ENCODE measurements at regions of chr17 and their contacts with region 1.

Region 1: GRCh38 chr17:64406321-64407200 is 15.9 kb upstream of the PECAM1 start:
- DNase-seq: no peak

Region 2: DNA sequence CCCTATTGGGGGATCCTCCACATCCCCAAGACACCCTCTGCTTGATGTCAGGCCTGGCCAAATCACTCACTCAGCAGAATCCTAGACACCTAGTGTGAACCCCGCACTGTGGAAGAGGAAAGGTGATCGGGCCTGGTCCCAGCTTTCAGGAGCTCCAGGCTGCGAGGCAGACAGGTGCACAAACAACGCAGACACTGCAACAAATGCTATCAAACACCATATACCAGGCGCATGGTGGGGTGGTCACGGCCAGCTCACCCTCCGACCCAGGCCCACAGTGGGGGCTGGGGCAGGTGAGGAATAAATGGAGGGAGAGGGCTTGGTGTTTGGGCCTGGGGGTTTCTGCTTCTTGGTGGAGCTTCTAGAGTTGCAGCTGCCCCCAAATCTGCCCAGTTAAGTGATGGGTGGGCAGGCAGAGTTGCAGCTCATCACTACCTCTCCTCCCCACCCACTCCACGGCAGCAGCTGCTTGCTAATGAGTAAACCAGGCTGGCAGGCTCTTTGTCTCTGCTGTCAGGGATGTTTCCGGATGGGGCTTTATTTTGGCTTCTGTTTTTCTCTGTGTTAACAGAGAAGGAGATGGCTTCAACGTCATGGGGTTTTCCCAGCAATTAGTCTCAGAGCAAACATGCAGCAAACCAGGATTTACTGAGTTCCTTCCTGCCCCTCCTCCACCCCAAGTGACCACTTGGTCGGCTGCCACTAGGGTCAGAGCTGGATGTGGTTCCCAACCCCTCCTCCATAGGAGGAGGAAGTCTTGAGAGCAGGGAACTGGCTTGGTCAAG is 62.5 kb before region 1 on chr17:
- intact Hi-C with region 1: no loop called
- DNase-seq: peak; percentile 92

Region 3: DNA sequence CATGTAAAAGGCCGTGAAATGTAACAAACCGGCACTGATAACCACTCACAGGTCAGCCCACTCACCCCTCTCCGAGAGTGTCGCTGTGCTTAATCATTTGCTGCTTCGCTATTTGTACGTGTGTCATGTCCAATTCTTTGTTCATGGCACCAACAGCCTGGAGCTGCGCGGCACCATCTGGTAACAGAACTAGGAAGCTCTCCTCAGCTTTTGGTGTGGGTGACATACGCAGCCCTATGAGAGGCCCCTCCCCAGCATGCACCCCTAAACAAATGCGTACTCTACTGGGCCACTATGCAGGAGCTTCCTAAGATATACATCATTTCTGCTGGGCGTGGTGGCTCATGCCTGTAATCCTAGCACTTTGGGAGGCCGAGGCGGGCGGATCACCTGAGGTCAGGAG is 13.6 kb before region 1 on chr17:
- intact Hi-C with region 1: loop called (anchors 2 kb)
- DNase-seq: no peak

Region 4: GRCh38 chr17:64441772-64442540 is 35.4 kb after region 1 on chr17:
- intact Hi-C with region 1: no loop called
- DNase-seq: peak; percentile 76

Measured in cardiac septum (tissue), 1 donor.